ENCODE measurements at regions of chr6 and their contacts with region 1.

Region 1: GRCh38 chr6:42637681-42638080 is 73.9 kb downstream of the UBR2 start:
- DNase-seq: no peak
- ATAC-seq: no peak
- H3K4me3 ChIP-seq: no peak overlapping the region
- H3K27ac ChIP-seq: no peak overlapping the region
- H3K4me1 ChIP-seq: no peaks in the 10 kb centered on the region
- H3K27me3 ChIP-seq: no peaks in the 10 kb centered on the region
- CTCF ChIP-seq: no peak
- POLR2A ChIP-seq: no peak
- RAD21 ChIP-seq: no peak

Region 2: DNA sequence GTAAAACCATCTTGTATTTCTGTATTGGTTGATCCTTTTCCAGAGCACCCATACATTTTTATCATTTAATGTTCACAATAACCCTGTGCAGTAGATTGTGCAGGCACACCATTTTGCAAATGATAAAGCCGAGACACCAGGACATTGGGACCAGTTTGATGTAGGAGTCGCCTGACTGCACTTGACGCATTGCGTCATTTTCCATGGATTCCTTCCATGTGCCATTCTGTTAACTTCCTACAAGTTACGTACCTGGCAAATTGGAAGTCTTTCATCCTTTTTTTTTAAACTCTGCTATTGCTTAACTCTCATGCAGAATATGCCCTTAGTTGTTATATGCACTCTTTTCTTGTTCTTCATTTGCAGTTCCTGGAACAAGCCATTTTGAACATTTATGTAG is 41.7 kb after region 1 on chr6:
- CTCF ChIA-PET with region 1: no interaction called
- POLR2A ChIA-PET with region 1: no interaction called
- RAD21 ChIA-PET with region 1: no interaction called
- intact Hi-C with region 1: loop called (anchors 1 kb)
- DNase-seq: no peak
- ATAC-seq: no peak
- H3K4me3 ChIP-seq: no peak overlapping the region
- H3K27ac ChIP-seq: no peak overlapping the region
- H3K4me1 ChIP-seq: no peaks in the 10 kb centered on the region
- H3K27me3 ChIP-seq: no peaks in the 10 kb centered on the region
- CTCF ChIP-seq: no peak
- POLR2A ChIP-seq: no peak
- RAD21 ChIP-seq: no peak

Region 3: GRCh38 chr6:42726485-42727086 is 88.9 kb after region 1 on chr6:
- CTCF ChIA-PET with region 1: no interaction called
- POLR2A ChIA-PET with region 1: no interaction called
- RAD21 ChIA-PET with region 1: no interaction called
- intact Hi-C with region 1: no loop called
- DNase-seq: peak; percentile 75
- ATAC-seq: peak; percentile 93
- H3K4me3 ChIP-seq: no peak overlapping the region
- H3K27ac ChIP-seq: no peak overlapping the region
- H3K4me1 ChIP-seq: peaks cover 4 to 9% of the 10 kb centered on the region in 2 experiments; a peak in 3 of 4 replicates
- H3K27me3 ChIP-seq: no peaks in the 10 kb centered on the region
- CTCF ChIP-seq: peak; percentile 87 to 94 (median 90)
- POLR2A ChIP-seq: no peak
- RAD21 ChIP-seq: peak; percentile 98